SK-N-SH (cell line): ENCODE measurements at regions of chr2 and their contacts with region 1.

Region 1: DNA sequence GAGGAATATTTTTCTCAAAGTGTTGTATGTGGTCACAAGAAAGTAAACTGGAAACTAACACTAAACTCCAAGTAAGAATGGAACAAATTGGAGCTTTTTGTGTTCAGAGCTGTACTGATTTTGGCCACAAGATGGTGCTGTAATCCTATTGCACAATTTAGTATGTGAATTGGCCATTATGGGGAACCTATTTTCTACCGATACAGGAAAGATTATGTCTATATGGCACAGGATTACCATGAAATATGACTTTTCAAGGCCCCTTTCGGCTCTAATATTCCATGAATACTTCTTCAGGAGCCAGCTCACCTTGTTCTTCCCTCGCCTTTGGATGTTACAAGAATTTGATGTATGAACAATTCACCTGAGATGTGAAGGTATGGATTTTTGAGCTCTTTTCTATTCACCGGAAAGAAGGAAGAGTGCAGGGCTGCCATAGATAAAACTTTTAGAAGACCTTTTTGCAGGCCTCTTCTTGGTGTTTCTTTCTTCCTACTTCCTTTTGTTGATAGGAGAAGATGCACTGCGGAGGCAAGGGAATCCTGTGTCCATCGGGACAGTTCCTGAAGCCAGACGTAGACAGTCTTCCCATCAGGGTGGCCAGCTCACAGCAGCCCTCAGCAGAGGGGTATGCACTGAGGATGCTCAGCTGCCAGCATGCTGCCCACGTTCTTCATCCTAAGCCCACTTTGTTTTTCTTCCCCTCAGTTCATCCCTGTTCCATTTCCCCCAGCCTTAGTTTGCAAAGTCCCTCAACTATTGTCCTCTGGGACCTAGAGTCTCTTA is 13.3 kb downstream of the MRPL44 start:
- DNase-seq: peak; percentile 48
- H3K4me3 ChIP-seq: no peak overlapping the region; a peak in 1 of 4 replicates
- H3K27ac ChIP-seq: peak overlapping the region in 1 of 2 experiments; percentile 15; a peak in 1 of 4 replicates
- H3K4me1 ChIP-seq: peaks cover 0 to 11% of the 10 kb centered on the region in 2 experiments; a peak in 1 of 4 replicates
- H3K27me3 ChIP-seq: no peaks in the 10 kb centered on the region
- CTCF ChIP-seq: peak; percentile 98
- EP300 ChIP-seq: no peak
- RAD21 ChIP-seq: peak; percentile 92

Region 2: DNA sequence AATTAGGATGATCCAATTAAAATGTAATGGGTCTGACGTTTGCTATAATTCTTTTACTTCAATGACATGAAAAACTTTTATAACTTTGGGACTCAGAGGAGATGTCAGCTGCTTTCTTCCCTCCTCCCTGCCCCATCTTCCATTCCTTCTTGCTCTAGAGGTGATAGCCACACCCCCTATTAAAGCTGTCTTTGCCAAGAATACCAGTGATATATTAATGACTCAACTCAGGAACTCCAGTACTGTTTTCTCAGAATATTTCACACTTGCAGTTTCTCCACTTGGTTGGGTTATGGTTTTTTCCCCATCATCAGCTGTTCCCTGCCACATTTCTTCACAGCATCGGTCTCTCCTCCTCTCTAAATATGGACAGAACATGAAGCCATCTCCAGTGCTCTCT is 734.5 kb before region 1 on chr2:
- CTCF ChIA-PET with region 1: no interaction called
- POLR2A ChIA-PET with region 1: no interaction called
- DNase-seq: no peak
- H3K4me3 ChIP-seq: no peak overlapping the region
- H3K27ac ChIP-seq: no peak overlapping the region
- H3K4me1 ChIP-seq: peaks cover 0 to 8% of the 10 kb centered on the region in 2 experiments; a peak in 1 of 4 replicates
- H3K27me3 ChIP-seq: no peaks in the 10 kb centered on the region
- CTCF ChIP-seq: no peak
- EP300 ChIP-seq: no peak
- RAD21 ChIP-seq: no peak

Region 3: GRCh38 chr2:223993621-223994232 is 23.2 kb after region 1 on chr2:
- CTCF ChIA-PET with region 1: interaction called, 255 read pairs
- POLR2A ChIA-PET with region 1: no interaction called
- DNase-seq: peak; percentile 69
- H3K4me3 ChIP-seq: no peak overlapping the region; a peak in 1 of 4 replicates
- H3K27ac ChIP-seq: no peak overlapping the region
- H3K4me1 ChIP-seq: peaks cover 0 to 7% of the 10 kb centered on the region in 2 experiments; a peak in 2 of 4 replicates
- H3K27me3 ChIP-seq: no peaks in the 10 kb centered on the region
- CTCF ChIP-seq: peak; percentile 87
- EP300 ChIP-seq: no peak
- RAD21 ChIP-seq: peak; percentile 90

Region 4: GRCh38 chr2:224008702-224009261 is 38.2 kb after region 1 on chr2:
- CTCF ChIA-PET with region 1: interaction called, 10 read pairs
- POLR2A ChIA-PET with region 1: no interaction called
- DNase-seq: peak; percentile 85
- H3K4me3 ChIP-seq: no peak overlapping the region; a peak in 1 of 4 replicates
- H3K27ac ChIP-seq: peak overlapping the region in 1 of 2 experiments; percentile 95; a peak in 2 of 4 replicates
- H3K4me1 ChIP-seq: peaks cover 26 to 28% of the 10 kb centered on the region in 2 experiments; a peak in 3 of 4 replicates
- H3K27me3 ChIP-seq: no peaks in the 10 kb centered on the region
- CTCF ChIP-seq: no peak
- EP300 ChIP-seq: peak in 1 of 2 experiments; percentile 92; a peak in 2 of 4 replicates
- RAD21 ChIP-seq: peak; percentile 5; the same call in 1 of the 2 replicates

Region 5: DNA sequence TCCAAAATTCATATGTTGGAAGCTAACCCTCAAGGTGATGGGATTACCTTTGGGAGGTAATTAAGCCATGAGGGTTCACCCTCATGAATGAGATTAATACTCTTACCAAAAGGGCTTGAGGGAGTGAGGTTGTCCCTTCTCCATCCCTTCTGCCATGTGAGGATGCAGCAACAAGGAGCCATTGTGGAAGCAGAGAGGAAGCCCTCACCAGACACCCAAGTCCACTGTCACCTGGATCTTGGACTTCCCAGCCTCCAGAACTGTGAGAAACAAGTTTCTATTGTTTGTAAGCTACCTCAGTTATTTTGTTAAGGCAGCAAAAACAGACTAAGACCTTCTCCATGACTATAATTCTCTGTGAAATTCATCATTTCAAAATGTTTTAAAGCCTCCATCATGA is 305.7 kb after region 1 on chr2:
- CTCF ChIA-PET with region 1: interaction called, 14 read pairs
- POLR2A ChIA-PET with region 1: no interaction called
- DNase-seq: no peak
- H3K4me3 ChIP-seq: no peak overlapping the region
- H3K27ac ChIP-seq: no peak overlapping the region
- H3K4me1 ChIP-seq: no peaks in the 10 kb centered on the region; a peak in 1 of 4 replicates
- H3K27me3 ChIP-seq: no peaks in the 10 kb centered on the region
- CTCF ChIP-seq: no peak
- EP300 ChIP-seq: no peak
- RAD21 ChIP-seq: no peak

Region 6: DNA sequence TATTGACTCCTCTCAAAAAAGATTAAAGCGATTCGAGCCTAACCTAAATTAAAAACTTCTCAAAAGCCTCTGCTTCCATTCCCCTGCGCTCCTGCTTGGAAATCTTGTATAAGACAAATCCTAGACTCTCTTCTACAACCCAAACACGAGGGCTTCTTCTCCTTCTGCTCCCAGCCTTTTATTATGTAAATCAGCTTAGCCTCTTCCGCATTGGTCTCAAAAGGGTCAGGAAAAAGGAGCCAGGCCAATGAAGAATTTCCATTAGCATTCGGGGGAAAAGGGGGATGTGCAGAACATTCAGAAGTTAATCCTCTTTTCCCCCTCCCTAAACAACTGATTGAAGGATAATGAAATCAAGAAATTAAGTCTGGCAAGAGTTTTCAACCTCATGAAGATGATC is 323.4 kb after region 1 on chr2:
- CTCF ChIA-PET with region 1: interaction called, 288 read pairs
- POLR2A ChIA-PET with region 1: no interaction called
- DNase-seq: no peak
- H3K4me3 ChIP-seq: no peak overlapping the region
- H3K27ac ChIP-seq: no peak overlapping the region
- H3K4me1 ChIP-seq: no peaks in the 10 kb centered on the region
- H3K27me3 ChIP-seq: no peaks in the 10 kb centered on the region; the same call in 1 of the 2 replicates
- CTCF ChIP-seq: no peak
- EP300 ChIP-seq: no peak
- RAD21 ChIP-seq: no peak